BJ (cell line): ENCODE measurements at regions of chr1 and their contacts with region 1.

Region 1: DNA sequence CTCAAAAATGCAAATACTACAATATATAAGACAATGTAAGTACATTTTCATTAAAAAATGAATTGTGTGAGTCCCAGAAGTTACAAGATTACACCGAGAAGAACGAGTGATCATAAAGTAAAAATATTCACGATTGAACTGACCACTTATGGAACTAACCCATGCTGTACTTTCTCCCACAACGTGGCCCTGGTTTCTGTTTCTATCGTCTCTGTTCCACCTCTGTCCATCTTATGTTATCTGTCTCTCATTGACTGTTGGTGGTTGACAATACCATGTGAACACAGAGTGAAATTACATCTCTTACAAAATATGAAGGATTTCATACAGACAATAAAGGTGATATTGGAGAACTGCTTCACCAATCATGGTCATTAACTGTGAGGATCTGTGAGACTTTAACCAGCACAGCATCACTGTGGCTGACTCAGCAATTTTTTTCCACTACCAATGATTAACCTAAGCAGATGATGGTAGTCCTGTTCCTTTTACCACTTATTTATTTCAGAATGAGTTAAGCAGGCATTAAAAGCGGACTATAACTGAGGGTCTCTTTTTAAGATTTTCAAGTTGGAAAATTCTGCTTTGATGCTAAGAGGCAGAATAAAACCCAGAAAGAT is 165.1 kb downstream of the TGFB2 start:
- DNase-seq: no peak
- H3K4me3 ChIP-seq: no peak overlapping the region
- H3K27me3 ChIP-seq: no peaks in the 10 kb centered on the region
- CTCF ChIP-seq: no peak

Region 2: GRCh38 chr1:218525031-218525430 is 14.8 kb after region 1 on chr1:
- CTCF ChIA-PET with region 1: no interaction called
- POLR2A ChIA-PET with region 1: no interaction called
- DNase-seq: no peak
- H3K4me3 ChIP-seq: no peak overlapping the region
- H3K27me3 ChIP-seq: no peaks in the 10 kb centered on the region
- CTCF ChIP-seq: no peak

Region 3: GRCh38 chr1:218874313-218874712 is 364.1 kb after region 1 on chr1:
- CTCF ChIA-PET with region 1: no interaction called
- POLR2A ChIA-PET with region 1: interaction called, 15 read pairs
- DNase-seq: no peak
- H3K4me3 ChIP-seq: no peak overlapping the region
- H3K27me3 ChIP-seq: no peaks in the 10 kb centered on the region
- CTCF ChIP-seq: no peak